ENCODE measurements at regions of chr18 and their contacts with region 1.

Region 1: DNA sequence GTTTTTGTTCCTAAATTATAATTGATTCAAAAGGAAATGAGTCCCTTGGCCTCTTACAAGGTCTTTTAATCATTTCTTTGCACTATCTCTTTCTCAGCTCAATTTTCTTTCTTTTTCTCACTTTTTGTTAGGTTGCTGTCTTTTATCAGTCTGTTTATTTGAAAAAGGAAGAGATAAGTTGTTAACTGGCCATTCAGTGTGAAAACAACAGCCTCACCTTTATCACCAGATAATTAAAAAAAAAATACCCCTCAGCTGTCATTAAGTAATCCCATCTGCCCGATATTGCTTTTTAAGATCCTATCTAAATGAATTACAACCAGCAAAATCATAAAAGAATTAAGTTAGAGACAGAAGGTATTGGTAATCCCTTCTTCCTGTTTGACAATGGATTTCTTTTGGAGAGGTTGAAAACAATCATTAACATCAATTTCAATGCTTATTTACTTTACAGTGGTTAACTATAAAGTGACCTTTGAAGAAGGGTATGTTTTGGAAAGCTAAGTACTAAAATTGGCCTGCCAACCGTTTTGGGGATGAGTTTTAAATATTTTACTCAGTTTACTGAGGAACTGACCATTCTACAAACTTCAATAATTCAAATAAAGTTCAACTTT is 104.9 kb downstream of the TGIF1 start:
- DNase-seq: no peak
- ATAC-seq: no peak
- H3K4me3 ChIP-seq: no peak overlapping the region
- H3K4me3 Mint-ChIP-seq: no peak overlapping the region
- H3K27ac ChIP-seq: no peak overlapping the region
- H3K27ac Mint-ChIP-seq: no peak overlapping the region
- H3K4me1 ChIP-seq: no peaks in the 10 kb centered on the region
- H3K4me1 Mint-ChIP-seq: no peaks in the 10 kb centered on the region
- H3K27me3 ChIP-seq: no peaks in the 10 kb centered on the region
- H3K27me3 Mint-ChIP-seq: no peaks in the 10 kb centered on the region

Region 2: GRCh38 chr18:3424280-3424890 is 130.5 kb before region 1 on chr18:
- CTCF ChIA-PET with region 1: no interaction called
- POLR2A ChIA-PET with region 1: no interaction called
- DNase-seq: no peak
- ATAC-seq: no peak
- H3K4me3 ChIP-seq: no peak overlapping the region
- H3K4me3 Mint-ChIP-seq: no peak overlapping the region
- H3K27ac ChIP-seq: no peak overlapping the region
- H3K27ac Mint-ChIP-seq: no peak overlapping the region
- H3K4me1 ChIP-seq: no peaks in the 10 kb centered on the region
- H3K4me1 Mint-ChIP-seq: no peaks in the 10 kb centered on the region
- H3K27me3 ChIP-seq: no peaks in the 10 kb centered on the region
- H3K27me3 Mint-ChIP-seq: no peaks in the 10 kb centered on the region

Region 3: DNA sequence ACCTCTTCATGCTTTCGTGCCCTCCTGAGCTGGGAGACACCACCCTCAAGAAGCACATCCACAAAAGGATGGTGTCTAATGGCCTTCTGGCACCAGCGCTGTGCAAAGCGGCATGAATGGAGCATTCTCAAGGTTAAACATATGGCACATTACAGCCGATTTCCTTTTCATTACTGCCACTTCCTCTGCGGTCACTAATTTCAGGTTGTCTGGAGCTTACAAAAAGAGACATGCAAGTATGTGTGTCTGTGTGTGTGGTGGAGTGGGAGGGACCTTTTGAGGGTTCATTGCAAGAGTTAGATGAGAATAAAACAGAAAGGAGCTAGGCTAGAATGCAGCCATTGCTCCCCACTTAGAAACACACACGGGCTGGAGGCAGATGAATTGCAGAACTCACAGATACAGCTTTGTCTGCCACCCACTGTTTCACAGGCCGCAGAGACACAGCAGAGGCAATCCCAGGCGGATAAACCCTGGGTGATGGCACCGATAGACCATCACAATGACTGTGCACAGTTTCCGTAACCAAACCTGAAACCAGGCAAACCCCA is 29.0 kb before region 1 on chr18:
- CTCF ChIA-PET with region 1: no interaction called
- POLR2A ChIA-PET with region 1: no interaction called
- DNase-seq: peak in 34 of 35 experiments; percentile 3 to 68 (median 22)
- ATAC-seq: peak; percentile 61 to 84 (median 68)
- H3K4me3 ChIP-seq: no peak overlapping the region
- H3K4me3 Mint-ChIP-seq: peak overlapping the region; percentile 44 to 58 (median 56)
- H3K27ac ChIP-seq: no peak overlapping the region
- H3K27ac Mint-ChIP-seq: peak overlapping the region in 1 of 2 donors; percentile 4
- H3K4me1 ChIP-seq: peaks cover 0 to 16% of the 10 kb centered on the region in 2 experiments
- H3K4me1 Mint-ChIP-seq: peaks cover 14 to 16% (median 15%) of the 10 kb centered on the region in 3 donors
- H3K27me3 ChIP-seq: no peaks in the 10 kb centered on the region
- H3K27me3 Mint-ChIP-seq: no peaks in the 10 kb centered on the region

Region 4: GRCh38 chr18:3947383-3947782 is 392.5 kb after region 1 on chr18:
- CTCF ChIA-PET with region 1: interaction called in 1 of 2 experiments, 10 read pairs
- POLR2A ChIA-PET with region 1: no interaction called
- DNase-seq: no peak
- ATAC-seq: no peak
- H3K4me3 ChIP-seq: no peak overlapping the region
- H3K4me3 Mint-ChIP-seq: no peak overlapping the region
- H3K27ac ChIP-seq: no peak overlapping the region
- H3K27ac Mint-ChIP-seq: no peak overlapping the region
- H3K4me1 ChIP-seq: no peaks in the 10 kb centered on the region
- H3K4me1 Mint-ChIP-seq: no peaks in the 10 kb centered on the region
- H3K27me3 ChIP-seq: peaks cover 0 to 2% of the 10 kb centered on the region in 2 experiments
- H3K27me3 Mint-ChIP-seq: peaks cover 0 to 21% of the 10 kb centered on the region in 2 donors

Measured in T-cell (primary cell).